CD8-positive, alpha-beta T cell (primary cell): ENCODE measurements at regions of chr12 and their contacts with region 1.

Region 1: GRCh38 chr12:4269279-4269991 is 4.1 kb upstream of the CCND2 start:
- DNase-seq: peak; percentile 87 to 97 (median 93)
- ATAC-seq: peak; percentile 42
- H3K4me3 ChIP-seq: peak overlapping the region; percentile 70 to 91
- H3K4me3 Mint-ChIP-seq: peak overlapping the region; percentile 100
- H3K27ac ChIP-seq: peak overlapping the region; percentile 93 to 94
- H3K27ac Mint-ChIP-seq: peak overlapping the region; percentile 95
- H3K4me1 ChIP-seq: peaks cover 20% of the 10 kb centered on the region
- H3K4me1 Mint-ChIP-seq: peaks cover 21% of the 10 kb centered on the region
- H3K27me3 ChIP-seq: no peaks in the 10 kb centered on the region
- H3K27me3 Mint-ChIP-seq: no peaks in the 10 kb centered on the region
- CTCF ChIP-seq: no peak

Region 2: DNA sequence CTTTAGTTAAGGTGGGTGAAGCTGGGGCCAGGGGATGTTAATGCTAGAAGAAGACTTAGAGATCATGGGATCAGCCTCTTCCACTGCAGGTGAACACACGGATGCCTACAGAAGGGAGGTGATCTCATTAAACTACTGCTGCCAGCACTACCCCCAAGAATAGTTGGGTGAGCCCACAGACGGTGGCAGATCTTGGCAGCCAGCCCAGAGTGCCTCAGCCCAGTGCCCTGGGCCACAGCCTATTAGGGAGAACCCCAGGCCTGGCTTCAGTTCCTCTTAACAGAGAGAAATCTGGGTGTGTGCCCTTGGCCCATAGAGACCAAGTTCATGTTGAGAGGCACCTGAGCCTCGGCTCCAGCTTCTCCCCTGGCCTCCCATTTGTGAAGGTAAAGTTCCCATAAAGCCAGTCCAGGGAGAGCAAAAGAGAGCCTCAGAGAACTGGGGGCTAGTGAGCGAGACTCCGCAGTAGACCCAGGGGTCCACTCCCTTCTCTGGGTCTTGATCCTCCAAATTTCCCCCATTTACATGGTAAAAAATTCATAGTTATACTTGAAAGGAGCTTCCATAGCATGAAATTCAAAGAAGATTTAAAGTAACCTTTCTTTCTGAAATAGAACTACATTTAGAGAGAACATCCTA is 120.9 kb before region 1 on chr12:
- CTCF ChIA-PET with region 1: interaction called, 65 read pairs
- POLR2A ChIA-PET with region 1: interaction called, 6 read pairs
- intact Hi-C with region 1: loop called (anchors 2 to 10 kb)
- DNase-seq: peak; percentile 29 to 75 (median 51)
- ATAC-seq: peak; percentile 65
- H3K4me3 ChIP-seq: no peak overlapping the region
- H3K4me3 Mint-ChIP-seq: no peak overlapping the region
- H3K27ac ChIP-seq: no peak overlapping the region
- H3K27ac Mint-ChIP-seq: no peak overlapping the region
- H3K4me1 ChIP-seq: peaks cover 20% of the 10 kb centered on the region
- H3K4me1 Mint-ChIP-seq: peaks cover 36% of the 10 kb centered on the region
- H3K27me3 ChIP-seq: no peaks in the 10 kb centered on the region
- H3K27me3 Mint-ChIP-seq: no peaks in the 10 kb centered on the region
- CTCF ChIP-seq: no peak

Region 3: DNA sequence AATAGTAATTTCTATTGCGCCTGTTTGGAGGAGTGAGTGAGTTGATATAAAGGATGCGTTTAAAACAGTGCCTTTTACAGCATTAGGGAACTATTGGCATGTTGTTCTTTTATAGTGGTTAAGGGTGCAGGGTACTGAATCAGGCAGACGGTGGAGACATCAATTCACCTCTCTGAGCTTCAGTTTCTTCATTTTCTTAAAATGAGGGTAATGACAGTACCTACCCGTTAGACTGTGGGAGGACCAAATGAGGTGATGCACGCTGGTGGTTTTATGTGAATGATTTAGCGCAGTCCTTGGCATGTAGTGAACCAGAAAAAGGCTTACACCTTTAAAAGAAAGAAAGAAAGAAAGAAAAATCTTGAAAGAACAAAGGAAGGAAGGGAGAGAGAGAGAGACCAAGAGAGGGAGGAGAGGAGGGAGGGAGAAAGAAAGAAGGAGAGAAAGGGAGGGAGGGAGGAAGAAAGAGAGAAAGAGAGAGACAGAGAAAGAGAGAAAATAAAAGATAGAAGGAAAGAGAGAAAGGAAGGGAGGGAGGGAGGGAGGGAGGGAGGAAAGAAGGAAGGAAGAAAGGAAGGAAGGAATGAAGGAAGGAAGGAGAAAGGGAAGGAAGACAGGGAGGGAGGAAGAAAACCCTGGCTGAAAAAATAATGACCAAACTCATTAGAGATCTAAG is 18.1 kb before region 1 on chr12:
- CTCF ChIA-PET with region 1: interaction called, 11 read pairs
- POLR2A ChIA-PET with region 1: interaction called, 5 read pairs
- intact Hi-C with region 1: loop called in 1 of 2 experiments (anchors 2 kb)
- DNase-seq: peak in 4 of 9 experiments; percentile 36 to 74 (median 61)
- ATAC-seq: peak; percentile 99
- H3K4me3 ChIP-seq: no peak overlapping the region
- H3K4me3 Mint-ChIP-seq: peak overlapping the region; percentile 27
- H3K27ac ChIP-seq: no peak overlapping the region
- H3K27ac Mint-ChIP-seq: peak overlapping the region; percentile 7
- H3K4me1 ChIP-seq: peaks cover 9% of the 10 kb centered on the region
- H3K4me1 Mint-ChIP-seq: peaks cover 9% of the 10 kb centered on the region
- H3K27me3 ChIP-seq: no peaks in the 10 kb centered on the region
- H3K27me3 Mint-ChIP-seq: no peaks in the 10 kb centered on the region
- CTCF ChIP-seq: peak; percentile 52

Region 4: DNA sequence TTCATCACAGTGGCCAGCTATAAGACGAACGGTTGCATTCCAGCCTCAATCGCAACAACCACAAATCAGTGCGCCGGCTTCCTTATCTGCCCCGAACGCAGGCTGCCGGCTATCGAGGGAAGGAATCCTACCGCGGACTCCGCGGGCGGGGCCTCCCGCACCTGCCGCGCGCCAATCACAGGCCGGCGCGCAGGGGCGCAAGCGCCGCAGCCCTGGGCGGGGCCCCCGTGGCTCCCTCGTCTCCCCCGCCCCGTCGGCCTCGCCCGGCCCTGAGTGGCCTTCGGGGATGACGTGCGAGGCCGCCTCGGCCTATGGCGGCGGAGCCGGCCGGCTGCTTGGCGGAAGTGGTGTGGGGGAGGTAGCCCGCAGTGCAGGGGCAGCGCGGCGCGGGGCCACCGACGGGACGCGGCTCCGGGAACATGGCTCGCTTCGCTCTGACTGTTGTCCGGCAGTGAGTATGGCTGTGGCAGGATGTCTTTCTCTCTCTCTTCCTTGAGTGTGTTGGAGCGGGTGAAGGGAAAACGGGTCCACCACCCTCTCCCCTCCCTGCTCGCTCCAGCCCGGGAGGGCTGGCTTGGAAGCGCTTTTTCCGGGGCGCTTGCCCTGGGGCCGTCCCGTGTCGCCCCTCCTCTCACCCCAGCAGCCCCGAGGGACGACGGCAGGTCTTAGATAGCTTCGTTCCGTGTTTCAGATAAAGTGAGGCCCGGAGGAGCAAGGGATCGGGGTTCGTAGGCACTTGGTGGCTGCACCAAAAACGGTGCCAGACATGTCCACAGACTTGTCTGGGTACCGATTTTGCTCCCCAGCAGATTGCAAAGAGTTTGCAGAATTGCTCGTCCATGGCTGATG is 51.6 kb after region 1 on chr12 and contains the start of gene TIGAR:
- CTCF ChIA-PET with region 1: no interaction called
- POLR2A ChIA-PET with region 1: interaction called, 3 read pairs
- intact Hi-C with region 1: loop called (anchors 2 kb)
- DNase-seq: peak; percentile 79 to 97 (median 90)
- ATAC-seq: peak; percentile 96
- H3K4me3 ChIP-seq: peak within 1 kb of the TSS; percentile 86 to 89
- H3K4me3 Mint-ChIP-seq: peak within 1 kb of the TSS; percentile 96
- H3K27ac ChIP-seq: peak within 1 kb of the TSS; percentile 81 to 83
- H3K27ac Mint-ChIP-seq: peak within 1 kb of the TSS; percentile 95
- H3K4me1 ChIP-seq: peaks cover 25% of the 10 kb centered on the region
- H3K4me1 Mint-ChIP-seq: peaks cover 40% of the 10 kb centered on the region
- H3K27me3 ChIP-seq: no peaks in the 10 kb centered on the region
- H3K27me3 Mint-ChIP-seq: no peaks in the 10 kb centered on the region
- CTCF ChIP-seq: no peak
- total RNA-seq, gene TIGAR: 14.0 to 15.8 TPM